ENCODE measurements at regions of chr11 and their contacts with region 1.

Region 1: DNA sequence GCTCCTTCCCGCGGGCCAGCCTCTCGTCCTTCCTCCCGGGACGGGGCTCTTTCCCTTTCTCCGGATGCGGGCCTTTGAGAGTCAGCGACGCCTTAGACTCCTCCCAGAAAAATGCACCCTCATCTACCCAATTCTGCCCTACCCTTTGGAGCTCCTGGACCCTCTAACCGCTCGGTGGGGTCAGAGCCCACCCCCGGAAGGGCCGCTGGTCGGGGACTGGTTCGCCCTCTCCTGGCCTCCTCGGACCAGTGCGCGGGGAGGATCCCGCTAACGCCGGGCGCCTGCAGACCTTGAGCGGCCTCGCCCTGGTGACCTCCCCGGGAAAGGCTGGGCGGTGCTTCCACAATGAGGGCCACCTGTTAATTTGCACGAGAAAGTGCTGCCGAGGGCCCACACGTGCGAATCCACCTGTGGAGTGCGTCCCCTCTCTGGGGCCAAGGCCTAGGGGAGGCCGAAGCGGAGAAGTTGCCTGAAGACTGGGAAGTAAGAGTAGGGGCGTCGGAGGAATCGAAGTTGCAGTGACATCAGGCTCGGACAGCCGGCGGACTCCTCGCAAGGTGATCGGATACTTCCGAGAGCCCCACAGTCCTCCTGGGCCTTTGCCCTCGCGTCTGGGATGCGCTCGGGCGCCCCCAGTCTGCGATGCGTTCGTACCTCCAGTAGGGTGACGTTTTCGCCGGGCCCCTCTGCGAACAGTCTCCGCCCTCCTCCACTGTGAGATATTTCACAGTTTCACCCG is 61.5 kb downstream of the ENDOD1 start:
- DNase-seq: peak; percentile 96
- ATAC-seq: peak; percentile 96
- H3K4me3 Mint-ChIP-seq: peak overlapping the region; percentile 86
- H3K27ac Mint-ChIP-seq: peak overlapping the region; percentile 93
- H3K4me1 Mint-ChIP-seq: peaks cover 40% of the 10 kb centered on the region
- H3K27me3 Mint-ChIP-seq: peaks cover 2% of the 10 kb centered on the region

Region 2: GRCh38 chr11:95089620-95090542 is 61.2 kb before region 1 on chr11 and contains the start of gene ENDOD1:
- CTCF ChIA-PET with region 1: interaction called, 57 read pairs
- DNase-seq: peak; percentile 89
- ATAC-seq: peak; percentile 94
- H3K4me3 Mint-ChIP-seq: peak within 1 kb of the TSS; percentile 89
- H3K27ac Mint-ChIP-seq: peak within 1 kb of the TSS; percentile 99
- H3K4me1 Mint-ChIP-seq: peaks cover 67% of the 10 kb centered on the region
- H3K27me3 Mint-ChIP-seq: no peaks in the 10 kb centered on the region
- total RNA-seq, gene ENDOD1: 37.1 to 40.5 TPM

Region 3: DNA sequence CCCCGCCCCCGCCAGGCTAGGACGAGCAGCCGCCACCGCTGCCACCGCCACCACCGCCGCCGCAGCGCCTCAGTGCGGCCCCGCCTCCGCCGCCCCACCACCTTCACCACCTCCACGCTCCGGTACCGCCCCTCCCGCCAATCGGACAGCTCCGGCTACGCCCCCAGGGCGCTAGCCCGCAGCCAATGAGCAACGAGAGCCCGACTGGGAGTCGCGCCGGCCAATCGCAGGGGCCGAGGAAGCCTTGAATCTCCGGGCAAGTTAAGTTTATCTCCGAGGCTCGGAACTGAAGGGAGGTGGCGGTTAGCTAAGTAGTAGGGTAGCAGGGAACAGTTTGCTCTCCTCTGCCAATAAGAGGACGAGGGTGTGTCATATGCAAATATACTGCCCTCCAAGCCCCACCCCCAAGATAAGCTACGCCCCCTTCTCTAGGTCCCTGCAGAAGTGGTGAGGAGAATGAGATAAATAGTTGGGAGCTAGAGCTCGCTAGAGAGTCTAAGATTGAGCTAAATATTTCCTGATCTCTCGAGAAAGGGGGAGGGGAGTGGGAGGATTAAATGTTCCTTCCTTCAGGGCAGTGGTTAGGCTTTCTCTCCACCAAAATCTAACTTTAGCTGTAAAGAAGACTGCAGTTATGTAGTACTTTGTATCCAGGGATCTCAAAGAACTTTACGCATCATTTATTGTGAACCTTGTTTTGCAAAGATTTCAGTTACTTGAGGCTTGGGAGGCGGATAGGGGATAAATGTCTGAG is 80.2 kb after region 1 on chr11 and contains the start of gene SESN3:
- CTCF ChIA-PET with region 1: interaction called, 26 read pairs
- DNase-seq: peak; percentile 99
- ATAC-seq: peak; percentile 95
- H3K4me3 Mint-ChIP-seq: peak within 1 kb of the TSS; percentile 84
- H3K27ac Mint-ChIP-seq: peak within 1 kb of the TSS; percentile 75
- H3K4me1 Mint-ChIP-seq: peaks cover 24% of the 10 kb centered on the region
- H3K27me3 Mint-ChIP-seq: peaks cover 16% of the 10 kb centered on the region
- total RNA-seq, gene SESN3: 9.3 to 24.3 TPM

Region 4: DNA sequence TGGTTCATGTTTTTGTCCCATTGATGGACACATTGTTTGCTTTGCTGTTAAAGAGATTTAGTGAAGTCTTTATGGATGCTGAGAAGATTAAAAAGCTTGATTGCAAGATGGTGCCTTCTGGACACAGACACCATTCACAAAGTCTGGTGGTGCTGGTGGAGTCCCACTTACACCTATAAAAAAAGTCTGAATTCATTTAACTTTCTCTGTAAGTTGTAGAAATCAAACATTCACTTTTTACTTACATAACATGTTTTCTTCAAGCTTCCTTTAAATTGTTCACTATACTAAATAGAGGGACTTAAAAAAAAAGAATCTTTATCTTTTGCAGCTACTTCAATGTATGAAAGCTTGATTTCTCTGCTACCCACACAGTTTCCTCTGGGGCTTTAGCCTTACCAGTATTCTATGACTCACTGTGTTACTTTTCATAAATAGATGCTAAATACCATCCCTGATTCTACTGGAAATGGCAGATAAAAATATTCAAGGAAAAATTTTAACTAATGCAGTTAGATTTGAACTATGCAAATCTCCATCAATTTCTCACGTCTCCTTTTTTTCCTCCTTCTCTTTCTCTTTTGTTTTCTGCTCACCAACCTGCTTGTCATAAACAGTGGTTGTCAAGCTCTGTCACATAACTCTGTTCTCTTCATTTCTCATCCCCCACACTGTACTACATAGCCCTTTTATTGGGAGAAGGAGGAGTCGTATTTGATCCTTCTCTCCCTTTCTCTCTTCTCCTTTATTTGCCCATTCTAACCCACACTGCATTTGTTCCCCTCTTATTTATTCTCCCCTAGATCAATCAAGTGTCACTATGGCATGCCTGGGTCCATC is 548.7 kb after region 1 on chr11:
- CTCF ChIA-PET with region 1: interaction called, 193 read pairs
- DNase-seq: no peak
- ATAC-seq: peak; percentile 71
- H3K4me3 Mint-ChIP-seq: peak overlapping the region; percentile 65
- H3K27ac Mint-ChIP-seq: peak overlapping the region; percentile 89
- H3K4me1 Mint-ChIP-seq: peaks cover 36% of the 10 kb centered on the region
- H3K27me3 Mint-ChIP-seq: no peaks in the 10 kb centered on the region

Region 5: DNA sequence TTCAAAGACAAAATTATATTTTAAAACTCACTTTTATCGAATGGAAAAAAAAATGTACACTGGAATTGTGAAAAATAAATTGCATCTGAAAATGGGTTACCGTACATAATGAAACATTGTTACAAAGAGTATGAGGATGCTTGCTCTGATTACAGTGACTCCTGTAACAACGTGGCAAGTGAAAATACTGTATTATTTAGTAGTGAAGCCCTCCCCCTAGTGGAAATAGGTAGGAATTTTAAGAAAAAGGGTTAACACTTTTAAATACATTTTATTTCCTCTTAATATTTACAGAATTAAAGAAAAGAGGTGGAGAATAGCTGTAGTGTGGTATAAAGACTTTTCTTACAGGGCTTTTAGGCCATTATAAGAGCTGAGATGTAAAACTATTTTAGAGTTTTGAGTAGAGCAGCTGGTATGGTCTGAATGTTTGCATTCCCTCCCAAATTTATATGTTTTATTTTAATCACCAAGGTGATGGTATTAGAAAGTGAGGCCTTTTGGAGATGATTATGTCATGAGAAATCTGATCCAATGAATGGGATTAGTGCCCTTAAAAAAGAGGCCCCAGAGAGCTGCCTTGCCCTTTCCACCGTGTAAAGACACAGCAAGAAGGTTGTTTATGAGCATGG is 613.3 kb after region 1 on chr11:
- CTCF ChIA-PET with region 1: interaction called, 57 read pairs
- DNase-seq: no peak
- ATAC-seq: peak; percentile 80
- H3K4me3 Mint-ChIP-seq: no peak overlapping the region
- H3K27ac Mint-ChIP-seq: no peak overlapping the region
- H3K4me1 Mint-ChIP-seq: no peaks in the 10 kb centered on the region
- H3K27me3 Mint-ChIP-seq: peaks cover 6% of the 10 kb centered on the region

Measured in activated CD8-positive, alpha-beta memory T cell treated with anti-CD3 and anti-CD28 coated beads, Interleukin-2, amount 10 ng/mL, durations not matched to agents 7 days and 5 days (primary cell).